HepG2 (cell line): ENCODE measurements at regions of chr1 and their contacts with region 1.

Region 1: DNA sequence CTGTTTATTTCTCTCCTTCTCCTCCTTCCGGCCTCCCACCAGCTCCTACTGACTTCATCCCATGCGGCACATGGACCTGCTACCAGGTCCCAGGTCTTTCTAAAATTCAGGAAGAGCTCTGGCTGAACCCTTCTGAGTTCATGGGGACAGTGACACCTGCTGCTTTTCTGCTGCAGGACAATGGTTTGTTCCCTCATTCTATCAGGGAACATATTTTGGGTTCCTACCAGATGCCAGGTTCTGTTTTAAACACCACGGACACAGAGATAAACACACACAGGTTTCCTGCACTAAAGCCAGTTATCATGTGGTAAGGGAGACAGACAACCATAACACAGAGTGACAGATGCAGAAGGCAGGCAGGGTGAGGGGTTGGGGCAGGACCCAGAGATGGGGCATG is 114.0 kb upstream of the RAB4A start:
- DNase-seq: peak; percentile 58
- ATAC-seq: peak; percentile 78
- H3K4me3 ChIP-seq: no peak overlapping the region
- H3K27ac ChIP-seq: no peak overlapping the region
- H3K4me1 ChIP-seq: peaks cover 50% of the 10 kb centered on the region
- H3K27me3 ChIP-seq: no peaks in the 10 kb centered on the region
- CTCF ChIP-seq: peak; percentile 72
- EP300 ChIP-seq: no peak
- POLR2A ChIP-seq: no peak
- RAD21 ChIP-seq: peak; percentile 90

Region 2: GRCh38 chr1:228664399-228664914 is 492.4 kb before region 1 on chr1:
- CTCF ChIA-PET with region 1: interaction called, 9 read pairs
- POLR2A ChIA-PET with region 1: no interaction called
- in situ Hi-C with region 1: no loop called
- intact Hi-C with region 1: loop called (anchors 1 kb)
- DNase-seq: peak; percentile 68
- ATAC-seq: peak; percentile 62; the same call in 2 of the 3 replicates
- H3K4me3 ChIP-seq: peak overlapping the region in 2 of 3 experiments; percentile 34 to 40; a peak in 2 of 6 replicates
- H3K27ac ChIP-seq: no peak overlapping the region
- H3K4me1 ChIP-seq: peaks cover 17% of the 10 kb centered on the region
- H3K27me3 ChIP-seq: no peaks in the 10 kb centered on the region
- CTCF ChIP-seq: peak; percentile 85
- EP300 ChIP-seq: no peak
- POLR2A ChIP-seq: no peak
- RAD21 ChIP-seq: peak; percentile 89

Region 3: GRCh38 chr1:228691926-228692325 is 464.9 kb before region 1 on chr1:
- CTCF ChIA-PET with region 1: interaction called, 3 read pairs
- POLR2A ChIA-PET with region 1: no interaction called
- in situ Hi-C with region 1: loop called (anchors 10 kb)
- intact Hi-C with region 1: no loop called
- DNase-seq: peak; percentile 72
- ATAC-seq: 0 out of 3 replicates have a peak, but pooled peaks have one; percentile 40
- H3K4me3 ChIP-seq: no peak overlapping the region
- H3K27ac ChIP-seq: no peak overlapping the region
- H3K4me1 ChIP-seq: peaks cover 17% of the 10 kb centered on the region; the same call in 1 of the 2 replicates
- H3K27me3 ChIP-seq: no peaks in the 10 kb centered on the region; a peak in 1 of 5 replicates
- CTCF ChIP-seq: peak; percentile 60
- EP300 ChIP-seq: no peak
- POLR2A ChIP-seq: no peak
- RAD21 ChIP-seq: peak; percentile 53

Region 4: DNA sequence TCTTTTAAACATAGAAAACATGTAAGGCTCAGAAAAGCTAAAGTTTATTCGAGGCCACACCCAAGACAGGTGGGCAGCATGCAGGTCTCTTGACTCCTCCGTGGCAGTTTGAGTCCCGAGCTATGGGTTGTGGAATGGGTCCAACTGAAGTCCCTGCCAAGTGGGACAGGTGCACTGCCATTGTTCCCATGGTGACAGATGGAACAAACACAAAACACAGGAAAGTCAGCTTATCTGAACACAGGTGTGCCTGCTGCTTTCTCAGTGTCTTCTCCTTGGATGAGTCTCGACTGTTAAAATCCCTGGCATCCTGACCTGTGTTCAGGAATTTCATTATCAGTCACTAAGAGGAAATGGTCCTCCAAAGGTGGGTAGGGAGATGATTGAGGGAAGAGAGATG is 15.1 kb after region 1 on chr1:
- CTCF ChIA-PET with region 1: no interaction called
- POLR2A ChIA-PET with region 1: no interaction called
- in situ Hi-C with region 1: no loop called
- intact Hi-C with region 1: no loop called
- DNase-seq: no peak
- ATAC-seq: no peak
- H3K4me3 ChIP-seq: no peak overlapping the region
- H3K27ac ChIP-seq: no peak overlapping the region
- H3K4me1 ChIP-seq: peaks cover 47% of the 10 kb centered on the region
- H3K27me3 ChIP-seq: peaks cover 0 to 3% of the 10 kb centered on the region in 2 experiments; a peak in 1 of 5 replicates
- CTCF ChIP-seq: no peak
- EP300 ChIP-seq: no peak
- POLR2A ChIP-seq: no peak
- RAD21 ChIP-seq: no peak